PC-9 (cell line): ENCODE measurements at regions of chr7 and their contacts with region 1.

Region 1: GRCh38 chr7:79862447-79863210 is 272.0 kb upstream of the GNAI1 start:
- DNase-seq: no peak
- H3K4me3 ChIP-seq: no peak overlapping the region
- H3K27ac ChIP-seq: no peak overlapping the region
- H3K4me1 ChIP-seq: no peaks in the 10 kb centered on the region
- H3K27me3 ChIP-seq: no peaks in the 10 kb centered on the region
- CTCF ChIP-seq: no peak

Region 2: GRCh38 chr7:79622781-79623180 is 239.8 kb before region 1 on chr7:
- CTCF ChIA-PET with region 1: no interaction called
- POLR2A ChIA-PET with region 1: no interaction called
- intact Hi-C with region 1: no loop called
- DNase-seq: peak in 1 of 2 experiments; percentile 71
- H3K4me3 ChIP-seq: no peak overlapping the region
- H3K27ac ChIP-seq: peak overlapping the region; percentile 43
- H3K4me1 ChIP-seq: peaks cover 15% of the 10 kb centered on the region
- H3K27me3 ChIP-seq: no peaks in the 10 kb centered on the region
- CTCF ChIP-seq: no peak

Region 3: DNA sequence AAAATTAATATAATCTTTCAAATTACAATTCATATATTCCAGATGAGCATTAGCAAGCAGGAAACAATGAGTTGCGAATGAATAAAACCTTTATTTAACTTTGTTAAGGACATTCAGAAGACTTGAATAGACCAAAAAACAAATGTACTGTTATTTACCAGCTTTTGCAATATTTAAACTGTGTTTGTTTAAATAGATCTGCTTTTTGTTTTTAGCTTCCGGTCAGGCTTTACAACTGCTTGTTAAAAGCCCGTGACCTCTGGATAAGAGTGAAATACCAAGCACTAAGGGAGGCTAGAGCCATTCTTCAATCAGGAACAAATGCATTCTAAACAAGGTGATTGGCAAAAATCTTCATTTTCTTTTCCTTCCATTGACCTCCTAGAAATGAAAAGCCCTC is 87.1 kb after region 1 on chr7:
- CTCF ChIA-PET with region 1: no interaction called
- POLR2A ChIA-PET with region 1: no interaction called
- intact Hi-C with region 1: no loop called
- DNase-seq: no peak
- H3K4me3 ChIP-seq: no peak overlapping the region
- H3K27ac ChIP-seq: no peak overlapping the region
- H3K4me1 ChIP-seq: no peaks in the 10 kb centered on the region
- H3K27me3 ChIP-seq: no peaks in the 10 kb centered on the region
- CTCF ChIP-seq: no peak

Region 4: DNA sequence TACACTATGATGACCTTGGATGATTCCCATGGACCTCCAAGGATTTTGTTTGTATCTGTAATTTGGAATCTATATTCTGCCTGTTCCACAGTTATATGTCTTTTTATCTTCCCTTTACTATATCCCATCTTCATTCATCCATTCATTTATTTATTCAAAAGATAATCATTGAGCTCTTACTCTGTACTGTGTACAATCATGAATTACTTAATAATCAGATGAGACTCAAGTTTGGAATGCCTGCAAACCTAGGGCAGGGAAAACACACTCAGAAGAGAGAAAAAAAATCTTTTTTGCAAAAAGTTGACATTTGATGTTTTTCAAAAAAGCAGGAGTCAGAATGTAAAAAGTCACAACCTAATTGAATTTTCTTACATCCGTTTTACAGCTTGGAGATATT is 101.8 kb after region 1 on chr7:
- CTCF ChIA-PET with region 1: no interaction called
- POLR2A ChIA-PET with region 1: interaction called, 19 read pairs
- intact Hi-C with region 1: no loop called
- DNase-seq: no peak
- H3K4me3 ChIP-seq: no peak overlapping the region
- H3K27ac ChIP-seq: no peak overlapping the region
- H3K4me1 ChIP-seq: no peaks in the 10 kb centered on the region
- H3K27me3 ChIP-seq: no peaks in the 10 kb centered on the region
- CTCF ChIP-seq: no peak